Activated T-helper 1 cell treated with anti-CD3 and anti-CD28 coated beads, Interleukin-12 subunit alpha, Interleukin-12 subunit beta, Interleukin-2, Interleukin-4 antibody, amounts not matched to agents 30 ng/mL and 10 ng/mL and 1 ng/mL, durations not matched to agents 14 hours and 24 hours and 36 hours (primary cell): ENCODE measurements at regions of chr6 and their contacts with region 1.

Region 1: GRCh38 chr6:15254070-15254841 is 8.4 kb downstream of the JARID2 start:
- DNase-seq: no peak
- H3K4me3 Mint-ChIP-seq: peak overlapping the region; percentile 41
- H3K27ac Mint-ChIP-seq: peak overlapping the region; percentile 92
- H3K4me1 Mint-ChIP-seq: peaks cover 98% of the 10 kb centered on the region
- H3K27me3 Mint-ChIP-seq: no peaks in the 10 kb centered on the region

Region 2: GRCh38 chr6:15266423-15266996 is 12.3 kb after region 1 on chr6:
- intact Hi-C with region 1: loop called (anchors 2 kb)
- DNase-seq: no peak
- H3K4me3 Mint-ChIP-seq: peak overlapping the region; percentile 52
- H3K27ac Mint-ChIP-seq: peak overlapping the region; percentile 27
- H3K4me1 Mint-ChIP-seq: peaks cover 93% of the 10 kb centered on the region
- H3K27me3 Mint-ChIP-seq: no peaks in the 10 kb centered on the region